MCF 10A (cell line): ENCODE measurements at regions of chr9 and their contacts with region 1.

Region 1: GRCh38 chr9:90942555-90942954 is 140.9 kb downstream of the SYK start:
- DNase-seq: peak; percentile 93
- H3K4me3 Mint-ChIP-seq: no peak overlapping the region
- H3K27ac Mint-ChIP-seq: peak overlapping the region; percentile 24
- H3K4me1 Mint-ChIP-seq: peaks cover 22% of the 10 kb centered on the region
- H3K27me3 Mint-ChIP-seq: no peaks in the 10 kb centered on the region
- CTCF ChIP-seq: no peak

Region 2: DNA sequence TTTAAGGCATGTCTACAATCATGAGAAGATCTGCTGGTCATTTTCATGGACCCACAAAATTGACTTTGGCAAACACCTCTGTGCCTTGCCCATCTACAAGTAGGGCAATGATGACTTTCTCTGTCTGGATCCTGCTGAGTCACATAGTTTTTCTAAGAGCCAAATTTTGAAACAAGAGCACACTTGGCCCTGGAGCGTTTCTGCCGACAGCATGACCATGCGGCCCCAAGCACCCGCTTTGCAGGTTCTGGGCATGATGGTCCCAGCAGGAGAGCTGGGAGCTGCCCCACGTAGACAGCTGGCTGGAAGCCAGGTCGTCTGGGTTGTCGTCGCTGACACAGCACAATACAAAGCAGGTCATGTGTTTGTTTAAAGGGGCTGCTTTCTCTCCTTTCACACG is 18.8 kb after region 1 on chr9:
- CTCF ChIA-PET with region 1: interaction called, 6 read pairs
- POLR2A ChIA-PET with region 1: interaction called, 15 read pairs
- intact Hi-C with region 1: no loop called
- DNase-seq: peak; percentile 81
- H3K4me3 Mint-ChIP-seq: no peak overlapping the region
- H3K27ac Mint-ChIP-seq: peak overlapping the region; percentile 71
- H3K4me1 Mint-ChIP-seq: peaks cover 29% of the 10 kb centered on the region
- H3K27me3 Mint-ChIP-seq: no peaks in the 10 kb centered on the region
- CTCF ChIP-seq: no peak

Region 3: GRCh38 chr9:90966480-90967144 is 24.1 kb after region 1 on chr9:
- CTCF ChIA-PET with region 1: interaction called, 5 read pairs
- POLR2A ChIA-PET with region 1: interaction called, 23 read pairs
- intact Hi-C with region 1: no loop called
- DNase-seq: no peak
- H3K4me3 Mint-ChIP-seq: no peak overlapping the region
- H3K27ac Mint-ChIP-seq: peak overlapping the region; percentile 84
- H3K4me1 Mint-ChIP-seq: peaks cover 41% of the 10 kb centered on the region
- H3K27me3 Mint-ChIP-seq: no peaks in the 10 kb centered on the region
- CTCF ChIP-seq: no peak

Region 4: GRCh38 chr9:91001146-91001611 is 58.6 kb after region 1 on chr9:
- CTCF ChIA-PET with region 1: no interaction called
- POLR2A ChIA-PET with region 1: interaction called, 22 read pairs
- intact Hi-C with region 1: no loop called
- DNase-seq: peak; percentile 99
- H3K4me3 Mint-ChIP-seq: no peak overlapping the region
- H3K27ac Mint-ChIP-seq: peak overlapping the region; percentile 88
- H3K4me1 Mint-ChIP-seq: peaks cover 36% of the 10 kb centered on the region
- H3K27me3 Mint-ChIP-seq: no peaks in the 10 kb centered on the region
- CTCF ChIP-seq: no peak